Sigmoid colon (tissue), 7 donors: ENCODE measurements at regions of chrX and their contacts with region 1.

Region 1: GRCh38 chrX:24259544-24260240 is 54.2 kb downstream of the SUPT20HL2 start:
- DNase-seq: peak; percentile 74
- H3K4me3 ChIP-seq: no peak overlapping the region
- H3K27ac ChIP-seq: peak overlapping the region in 3 of 4 donors; percentile 3 to 63 (median 60)
- H3K4me1 ChIP-seq: peaks cover 0 to 12% (median 5%) of the 10 kb centered on the region in 4 donors
- H3K27me3 ChIP-seq: no peaks in the 10 kb centered on the region
- CTCF ChIP-seq: peak; percentile 26 to 48 (median 32)
- EP300 ChIP-seq: no peak
- POLR2A ChIP-seq: no peak

Region 2: GRCh38 chrX:24231131-24231540 is 28.6 kb before region 1 on chrX:
- intact Hi-C with region 1: no loop called
- DNase-seq: no peak
- H3K4me3 ChIP-seq: no peak overlapping the region
- H3K27ac ChIP-seq: peak overlapping the region in 2 of 4 donors; percentile 23 to 41
- H3K4me1 ChIP-seq: peaks cover 0 to 4% (median 0%) of the 10 kb centered on the region in 4 donors
- H3K27me3 ChIP-seq: no peaks in the 10 kb centered on the region
- CTCF ChIP-seq: no peak
- EP300 ChIP-seq: no peak
- POLR2A ChIP-seq: no peak

Region 3: DNA sequence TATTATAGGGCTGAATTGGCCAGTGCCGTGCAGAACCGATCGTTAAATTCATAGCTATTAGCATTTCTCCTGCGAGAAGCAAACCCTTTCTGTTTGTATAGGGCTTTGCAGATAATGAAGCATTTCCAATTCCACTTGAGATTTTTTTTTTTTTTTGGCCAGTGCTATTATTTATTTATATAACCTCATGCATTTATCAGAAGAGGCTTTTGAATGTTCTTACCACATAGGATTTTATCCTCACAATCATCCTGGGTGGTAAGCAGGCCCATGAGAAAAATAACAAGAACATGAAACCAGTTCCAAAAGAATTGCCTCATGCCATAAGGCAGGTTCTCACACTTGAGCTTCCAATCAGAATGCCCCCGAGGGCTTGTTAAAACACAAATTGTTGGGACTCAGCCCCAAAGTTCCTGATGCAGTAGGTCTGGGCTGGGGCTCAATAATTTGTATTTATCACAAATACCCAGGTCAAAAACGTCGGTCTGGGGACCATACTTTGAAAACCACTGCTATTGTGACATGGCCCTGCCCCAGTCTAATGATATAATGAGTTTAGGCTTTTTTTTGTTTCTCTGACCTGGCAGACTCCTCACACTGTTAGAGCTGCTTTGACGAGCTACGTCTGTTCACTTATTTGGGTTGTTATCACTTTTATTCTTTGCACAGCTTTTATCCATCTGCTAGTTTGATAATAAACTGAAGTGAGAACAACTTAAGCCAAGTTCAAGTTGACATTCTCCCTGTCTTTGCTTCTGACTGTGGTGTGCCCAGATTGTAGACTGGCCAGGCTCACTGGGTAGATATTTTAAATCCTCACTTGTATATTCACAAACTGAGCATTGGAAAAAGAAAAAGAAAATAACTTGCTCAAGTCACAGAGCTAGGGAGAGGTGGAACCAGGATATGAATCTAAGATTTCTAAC is 120.8 kb after region 1 on chrX:
- intact Hi-C with region 1: loop called (anchors 5 kb)
- DNase-seq: no peak
- H3K4me3 ChIP-seq: no peak overlapping the region
- H3K27ac ChIP-seq: peak overlapping the region in 1 of 4 donors; percentile 45
- H3K4me1 ChIP-seq: peaks cover 0 to 12% (median 0%) of the 10 kb centered on the region in 4 donors
- H3K27me3 ChIP-seq: no peaks in the 10 kb centered on the region
- CTCF ChIP-seq: no peak
- EP300 ChIP-seq: no peak
- POLR2A ChIP-seq: no peak